ENCODE measurements at regions of chr16 and their contacts with region 1.

Region 1: GRCh38 chr16:31084616-31085260 is 4.0 kb downstream of the PRSS53 start:
- DNase-seq: no peak
- H3K4me3 ChIP-seq: no peak overlapping the region
- CTCF ChIP-seq: no peak

Region 2: GRCh38 chr16:31063843-31064611 is 20.7 kb before region 1 on chr16:
- CTCF ChIA-PET with region 1: no interaction called
- POLR2A ChIA-PET with region 1: no interaction called
- DNase-seq: no peak
- H3K4me3 ChIP-seq: no peak overlapping the region
- CTCF ChIP-seq: no peak

Region 3: GRCh38 chr16:31073968-31074813 is 10.5 kb before region 1 on chr16 and contains the starts of genes ZNF646 and ZNF668:
- CTCF ChIA-PET with region 1: interaction called, 3 read pairs
- POLR2A ChIA-PET with region 1: interaction called, 17 read pairs
- DNase-seq: peak; percentile 94
- H3K4me3 ChIP-seq: peak within 1 kb of the TSS; percentile 98
- CTCF ChIP-seq: no peak